Activated T-helper 1 cell treated with anti-CD3 and anti-CD28 coated beads, Interleukin-12 subunit alpha, Interleukin-12 subunit beta, Interleukin-2, Interleukin-4 antibody, amounts not matched to agents 30 ng/mL and 10 ng/mL and 1 ng/mL, durations not matched to agents 14 hours and 24 hours and 36 hours (primary cell): ENCODE measurements at regions of chrX and their contacts with region 1.

Region 1: GRCh38 chrX:13167481-13168231 is 123.2 kb upstream of the FAM9C start:
- DNase-seq: no peak
- H3K4me3 Mint-ChIP-seq: peak overlapping the region; percentile 53
- H3K27ac Mint-ChIP-seq: peak overlapping the region; percentile 91
- H3K4me1 Mint-ChIP-seq: peaks cover 29% of the 10 kb centered on the region
- H3K27me3 Mint-ChIP-seq: no peaks in the 10 kb centered on the region

Region 2: DNA sequence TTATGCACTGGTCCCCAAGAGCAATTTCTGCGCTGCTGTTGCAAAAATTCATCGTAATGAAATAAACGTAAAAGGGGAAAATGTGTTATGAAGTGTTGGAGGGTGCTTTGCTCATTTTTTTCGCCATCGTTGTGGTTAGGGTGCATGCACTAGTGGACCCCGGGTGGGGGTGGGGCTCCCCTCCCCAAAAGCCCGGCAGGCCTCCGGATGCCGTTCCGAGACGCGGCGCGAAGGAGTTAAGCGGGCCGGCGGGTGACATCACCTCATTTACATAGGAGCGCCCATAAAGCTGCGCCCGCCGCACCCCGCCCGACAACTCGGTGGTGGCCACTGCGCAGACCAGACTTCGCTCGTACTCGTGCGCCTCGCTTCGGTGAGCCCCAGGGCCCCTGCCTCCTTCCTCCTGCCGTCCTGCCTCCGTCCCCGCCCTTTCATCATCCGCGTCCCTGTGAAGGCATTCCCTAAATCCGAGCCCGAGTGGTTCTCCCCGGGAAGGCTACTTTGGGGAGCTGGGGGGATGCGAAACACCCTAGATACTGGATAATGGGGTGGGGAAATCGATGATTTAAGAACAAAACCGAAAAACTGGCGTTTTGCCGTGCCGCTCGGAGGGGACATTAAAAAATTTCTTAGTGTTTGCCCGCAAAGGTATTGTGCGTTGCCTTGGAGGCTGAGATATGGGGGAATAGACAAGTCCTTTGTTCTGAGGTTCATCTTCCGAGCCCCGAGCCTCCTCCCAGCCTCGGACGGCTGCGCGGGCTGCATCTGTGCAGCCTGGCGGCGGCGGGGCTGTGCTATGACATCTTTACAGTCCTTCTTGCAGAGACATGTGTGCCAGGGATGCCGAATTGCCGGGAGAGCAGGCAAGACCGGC is 192.6 kb before region 1 on chrX and contains the start of gene TMSB4X:
- intact Hi-C with region 1: loop called (anchors 5 kb)
- DNase-seq: peak; percentile 83
- H3K4me3 Mint-ChIP-seq: peak within 1 kb of the TSS; percentile 97
- H3K27ac Mint-ChIP-seq: peak within 1 kb of the TSS; percentile 98
- H3K4me1 Mint-ChIP-seq: peaks cover 50% of the 10 kb centered on the region
- H3K27me3 Mint-ChIP-seq: no peaks in the 10 kb centered on the region
- total RNA-seq, gene TMSB4X: 6,544 and 6,612 TPM in 2 replicates

Region 3: GRCh38 chrX:13131396-13132137 is 36.1 kb before region 1 on chrX:
- intact Hi-C with region 1: loop called (anchors 5 kb)
- DNase-seq: peak; percentile 6
- H3K4me3 Mint-ChIP-seq: peak overlapping the region; percentile 26
- H3K27ac Mint-ChIP-seq: peak overlapping the region; percentile 55
- H3K4me1 Mint-ChIP-seq: peaks cover 33% of the 10 kb centered on the region
- H3K27me3 Mint-ChIP-seq: no peaks in the 10 kb centered on the region

Region 4: DNA sequence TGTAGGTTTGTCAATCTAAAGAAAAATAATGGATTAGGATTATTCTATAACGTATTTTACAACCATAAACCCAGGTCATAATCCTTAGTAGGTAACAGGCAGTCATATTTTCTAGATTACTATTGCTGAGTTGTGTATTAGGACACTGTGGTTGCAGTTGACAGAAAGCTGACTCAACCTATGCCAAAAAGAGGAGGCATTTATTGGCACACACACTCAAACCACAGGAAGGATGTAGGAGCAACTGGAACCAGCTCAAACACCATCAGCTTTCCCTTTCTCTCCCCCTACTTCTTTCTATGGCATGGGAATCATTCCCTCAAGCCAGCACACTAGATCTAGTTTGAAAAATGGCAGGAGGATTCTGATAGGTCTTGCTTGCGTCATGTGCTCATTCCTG is 13.2 kb after region 1 on chrX:
- intact Hi-C with region 1: no loop called
- DNase-seq: no peak
- H3K4me3 Mint-ChIP-seq: no peak overlapping the region
- H3K27ac Mint-ChIP-seq: no peak overlapping the region
- H3K4me1 Mint-ChIP-seq: no peaks in the 10 kb centered on the region
- H3K27me3 Mint-ChIP-seq: no peaks in the 10 kb centered on the region

Region 5: GRCh38 chrX:13254076-13254785 is 86.6 kb after region 1 on chrX:
- intact Hi-C with region 1: loop called (anchors 1 kb)
- DNase-seq: no peak
- H3K4me3 Mint-ChIP-seq: peak overlapping the region; percentile 3
- H3K27ac Mint-ChIP-seq: peak overlapping the region; percentile 14
- H3K4me1 Mint-ChIP-seq: peaks cover 59% of the 10 kb centered on the region
- H3K27me3 Mint-ChIP-seq: no peaks in the 10 kb centered on the region

Region 6: DNA sequence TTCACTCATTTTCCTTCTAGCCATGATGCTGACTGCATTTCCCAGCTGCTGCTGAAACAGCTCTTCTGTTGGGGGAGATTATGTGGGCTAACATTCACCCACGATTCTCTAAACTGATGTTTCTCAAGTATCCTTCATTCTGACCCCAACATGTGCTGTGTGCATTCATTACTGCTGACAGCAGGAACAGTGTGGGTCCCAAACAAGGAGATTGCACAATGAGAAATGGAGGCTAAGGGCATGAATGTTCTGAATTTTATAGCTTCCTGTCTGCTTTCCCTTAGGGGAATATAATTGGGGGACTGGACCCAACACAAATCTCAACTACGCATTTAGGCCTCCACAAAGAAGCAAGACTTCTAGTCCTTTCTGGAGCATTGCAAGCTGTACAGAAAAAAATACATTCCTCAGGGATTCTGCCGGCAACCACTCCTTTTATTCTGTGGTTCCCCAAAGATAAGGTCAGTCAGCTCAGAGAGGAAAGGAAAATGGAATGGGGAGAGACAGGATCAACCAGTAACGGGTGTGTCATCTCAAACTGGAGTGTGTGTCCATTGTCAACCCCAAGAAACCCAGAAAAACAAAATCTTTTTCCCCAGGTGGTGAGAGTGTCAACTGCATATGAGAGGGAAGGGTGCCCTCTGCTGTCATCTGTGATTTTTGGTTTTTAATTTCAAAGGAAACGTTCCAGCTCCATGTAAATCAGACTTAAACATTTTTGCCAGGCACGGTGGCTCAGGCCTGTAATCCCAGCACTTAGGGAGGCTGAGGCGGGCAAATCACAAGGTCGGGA is 320.3 kb after region 1 on chrX:
- intact Hi-C with region 1: loop called (anchors 5 kb)
- DNase-seq: peak; percentile 27
- H3K4me3 Mint-ChIP-seq: peak overlapping the region; percentile 7
- H3K27ac Mint-ChIP-seq: peak overlapping the region; percentile 61
- H3K4me1 Mint-ChIP-seq: peaks cover 26% of the 10 kb centered on the region
- H3K27me3 Mint-ChIP-seq: no peaks in the 10 kb centered on the region